Upper lobe of right lung (tissue), 1 donor: ENCODE measurements at regions of chr5 and their contacts with region 1.

Region 1: GRCh38 chr5:93789173-93790070 is 48.0 kb upstream of the POU5F2 start:
- DNase-seq: no peak
- ATAC-seq: no peak
- H3K4me3 ChIP-seq: no peak overlapping the region
- H3K27ac ChIP-seq: no peak overlapping the region
- H3K4me1 ChIP-seq: peaks cover 5% of the 10 kb centered on the region
- H3K27me3 ChIP-seq: no peaks in the 10 kb centered on the region
- CTCF ChIP-seq: no peak

Region 2: GRCh38 chr5:93582677-93583438 is 206.6 kb before region 1 on chr5 and contains the start of gene NR2F1:
- intact Hi-C with region 1: loop called (anchors 10 kb)
- DNase-seq: no peak
- ATAC-seq: peak; percentile 15
- H3K4me3 ChIP-seq: peak within 1 kb of the TSS; percentile 56
- H3K27ac ChIP-seq: peak within 1 kb of the TSS; percentile 84
- H3K4me1 ChIP-seq: peaks cover 26% of the 10 kb centered on the region
- H3K27me3 ChIP-seq: peaks cover 74% of the 10 kb centered on the region
- CTCF ChIP-seq: no peak
- total RNA-seq, gene NR2F1: 83.2 TPM

Region 3: GRCh38 chr5:93594591-93595419 is 194.6 kb before region 1 on chr5:
- intact Hi-C with region 1: no loop called
- DNase-seq: no peak
- ATAC-seq: no peak
- H3K4me3 ChIP-seq: peak overlapping the region; percentile 11
- H3K27ac ChIP-seq: peak overlapping the region; percentile 68
- H3K4me1 ChIP-seq: peaks cover 3% of the 10 kb centered on the region
- H3K27me3 ChIP-seq: peaks cover 65% of the 10 kb centered on the region
- CTCF ChIP-seq: no peak

Region 4: GRCh38 chr5:93611976-93612854 is 177.2 kb before region 1 on chr5:
- intact Hi-C with region 1: loop called (anchors 10 kb)
- DNase-seq: no peak
- ATAC-seq: peak; percentile 43
- H3K4me3 ChIP-seq: no peak overlapping the region
- H3K27ac ChIP-seq: no peak overlapping the region
- H3K4me1 ChIP-seq: no peaks in the 10 kb centered on the region
- H3K27me3 ChIP-seq: peaks cover 80% of the 10 kb centered on the region
- CTCF ChIP-seq: no peak